Dorsolateral prefrontal cortex (tissue), 120 donors: ENCODE measurements at regions of chr7 and their contacts with region 1.

Region 1: GRCh38 chr7:30134611-30135545 is at the start of gene MTURN:
- DNase-seq: peak; percentile 88 to 95 (median 92)
- H3K4me3 ChIP-seq: peak within 1 kb of the TSS; percentile 73 to 99 (median 96)
- H3K27ac ChIP-seq: peak within 1 kb of the TSS; percentile 87 to 100 (median 97)
- H3K27me3 ChIP-seq: no peaks in the 10 kb centered on the region
- CTCF ChIP-seq: peak in 1 of 56 donors; percentile 15
- total RNA-seq, gene MTURN: 338 to 1,341 (median 633) TPM

Region 2: DNA sequence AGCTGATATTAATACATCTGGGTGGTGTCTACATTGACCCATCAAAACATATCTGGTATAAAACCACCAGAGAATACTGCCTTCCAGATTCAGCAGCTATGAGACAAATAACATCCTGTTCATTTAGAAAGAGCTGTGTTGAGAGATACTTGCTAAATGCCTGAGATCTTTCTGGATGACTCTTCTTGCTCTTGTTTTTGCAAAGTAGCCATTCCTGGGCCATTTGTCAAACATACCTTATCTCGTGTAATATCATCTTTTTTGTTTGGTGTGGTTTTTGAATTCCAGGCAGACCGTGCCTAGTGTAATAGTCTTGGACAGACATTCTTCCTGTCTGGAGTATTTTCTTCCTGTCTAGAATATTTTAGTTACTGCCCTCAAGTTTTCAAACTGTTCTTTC is 645.9 kb before region 1 on chr7:
- intact Hi-C with region 1: loop called in 1 of 2 experiments (anchors 10 kb)
- DNase-seq: no peak
- H3K4me3 ChIP-seq: peak overlapping the region in 22 of 59 donors; percentile 0 to 63 (median 9)
- H3K27ac ChIP-seq: peak overlapping the region; percentile 14 to 100 (median 97)
- H3K27me3 ChIP-seq: no peaks in the 10 kb centered on the region
- CTCF ChIP-seq: no peak

Region 3: DNA sequence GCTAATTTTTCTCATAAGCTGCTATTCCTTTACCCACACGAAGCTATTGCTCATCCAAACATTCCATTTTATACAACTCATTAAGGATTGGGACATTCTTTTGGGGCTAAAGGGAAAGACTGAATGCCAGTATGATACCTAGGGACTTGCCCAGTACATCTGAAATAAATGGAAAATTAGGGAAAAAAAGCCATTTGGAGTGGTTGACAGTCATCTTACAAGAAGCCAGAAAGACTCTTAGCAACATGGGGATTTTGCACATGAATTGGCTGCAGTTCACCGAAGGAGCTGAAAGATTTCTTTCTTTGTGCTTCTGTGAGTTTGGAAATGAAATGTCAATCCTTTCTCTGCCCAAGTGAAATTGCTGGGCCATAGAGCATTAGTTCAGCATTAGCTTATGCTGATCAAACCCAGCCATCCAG is 43.4 kb before region 1 on chr7:
- intact Hi-C with region 1: no loop called
- DNase-seq: no peak
- H3K4me3 ChIP-seq: no peak overlapping the region
- H3K27ac ChIP-seq: peak overlapping the region in 1 of 59 donors; percentile 12
- H3K27me3 ChIP-seq: no peaks in the 10 kb centered on the region
- CTCF ChIP-seq: no peak

Region 4: DNA sequence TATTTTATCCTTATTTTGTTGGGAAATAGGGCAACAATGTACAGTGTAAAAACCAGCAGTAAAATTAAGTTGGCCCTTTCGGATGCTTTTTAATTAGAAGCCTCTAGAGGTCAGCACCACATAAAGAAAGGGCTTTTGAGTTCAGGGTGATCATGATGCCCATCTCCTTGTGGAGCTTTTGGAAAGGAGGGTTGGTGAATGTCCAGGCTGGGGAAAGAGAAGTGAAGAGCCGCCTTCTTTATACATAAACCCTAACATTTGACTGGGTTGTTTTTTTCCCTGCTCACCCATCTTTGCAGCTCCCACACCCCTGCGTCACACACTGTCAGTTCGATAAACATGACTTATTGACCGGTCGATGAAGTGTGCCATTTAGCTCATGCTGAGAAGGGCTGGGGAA is 29.7 kb after region 1 on chr7:
- intact Hi-C with region 1: loop called in 1 of 2 experiments (anchors 2 kb)
- DNase-seq: peak in 1 of 10 donors; percentile 46
- H3K4me3 ChIP-seq: peak overlapping the region in 4 of 59 donors; percentile 2 to 48 (median 34)
- H3K27ac ChIP-seq: peak overlapping the region in 58 of 59 donors; percentile 61 to 99 (median 94)
- H3K27me3 ChIP-seq: no peaks in the 10 kb centered on the region
- CTCF ChIP-seq: peak; percentile 41 to 92 (median 72)

Region 5: DNA sequence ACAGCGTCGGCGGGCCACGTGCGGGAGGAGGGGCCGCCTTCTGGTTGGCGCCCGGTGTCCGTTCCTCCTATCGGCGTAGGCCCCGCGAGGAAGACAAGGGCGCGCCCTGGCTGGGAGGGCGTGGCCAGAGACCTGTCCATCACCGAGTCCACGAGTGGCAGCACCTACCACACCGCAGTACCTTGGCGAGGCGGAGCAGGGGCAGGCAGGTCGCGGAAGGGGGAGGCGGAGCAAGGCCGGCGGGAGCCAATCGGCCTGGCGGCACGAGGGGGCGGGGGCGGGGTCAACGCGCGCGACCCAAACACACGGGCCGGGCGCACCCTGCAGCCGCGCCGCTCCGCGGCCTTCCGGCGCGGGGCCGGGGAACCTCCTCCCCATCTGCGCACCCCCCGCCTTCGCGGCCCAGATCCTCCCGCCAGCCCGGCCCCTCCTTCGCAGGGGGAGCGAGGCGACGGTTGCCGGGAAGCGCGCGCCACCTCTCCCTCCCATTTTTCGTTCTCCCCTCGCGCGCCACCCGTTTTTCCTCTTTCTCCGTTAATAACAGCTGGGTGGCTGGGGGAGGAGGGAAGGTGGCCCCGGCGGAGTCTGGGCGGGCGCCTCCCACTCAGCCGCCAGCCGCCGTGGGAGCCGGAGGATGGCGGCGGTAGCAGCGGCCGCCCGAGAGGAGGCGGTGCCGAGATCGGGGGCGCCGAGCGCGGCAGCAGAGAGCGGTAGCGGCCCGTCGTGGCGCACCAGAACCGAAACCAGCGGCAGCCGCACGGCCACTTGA is 149.6 kb after region 1 on chr7 and contains the start of gene ZNRF2:
- intact Hi-C with region 1: loop called in 1 of 2 experiments (anchors 10 kb)
- DNase-seq: peak; percentile 82 to 99 (median 95)
- H3K4me3 ChIP-seq: peak within 1 kb of the TSS; percentile 36 to 92 (median 77)
- H3K27ac ChIP-seq: peak within 1 kb of the TSS; percentile 63 to 99 (median 95)
- H3K27me3 ChIP-seq: no peaks in the 10 kb centered on the region
- CTCF ChIP-seq: peak in 51 of 56 donors; percentile 13 to 65 (median 43)
- total RNA-seq, gene ZNRF2: 11.4 to 24.8 (median 16.7) TPM

Region 6: DNA sequence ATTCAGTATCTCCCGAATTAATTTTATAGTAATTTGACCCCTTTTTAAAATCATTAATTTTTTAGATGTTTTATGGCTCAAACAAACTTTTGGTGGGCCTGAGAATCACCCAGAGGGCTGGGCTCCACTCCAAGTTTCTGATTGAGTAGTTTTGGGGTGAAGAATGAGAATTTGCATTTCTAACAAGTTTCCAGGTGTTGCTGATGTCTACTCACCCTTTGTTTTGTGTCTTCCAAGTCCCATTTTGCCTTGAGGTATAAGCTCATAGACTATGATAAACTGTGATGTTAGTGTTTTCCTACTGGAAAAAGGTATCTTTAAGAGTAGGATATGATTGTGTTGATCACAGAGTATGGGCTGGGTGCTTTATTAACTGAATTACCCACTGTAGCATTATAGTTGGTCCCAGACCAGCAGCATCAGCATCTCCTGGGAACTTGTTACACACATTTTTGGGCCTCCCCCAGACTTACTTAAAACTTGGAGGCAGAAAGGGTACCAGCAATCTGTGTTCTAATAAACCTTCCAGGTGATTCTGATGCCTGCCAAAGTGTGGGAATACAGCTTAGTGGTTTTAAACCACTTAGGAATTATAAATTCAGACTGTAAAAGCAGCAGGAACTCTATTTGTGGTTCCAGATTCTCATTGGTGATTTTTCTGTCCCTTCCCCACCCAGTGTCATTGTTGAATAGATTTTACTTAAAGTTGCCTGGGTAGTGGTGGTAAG is 168.6 kb after region 1 on chr7:
- intact Hi-C with region 1: no loop called
- DNase-seq: no peak
- H3K4me3 ChIP-seq: no peak overlapping the region
- H3K27ac ChIP-seq: no peak overlapping the region
- H3K27me3 ChIP-seq: no peaks in the 10 kb centered on the region
- CTCF ChIP-seq: no peak